Calu3 (cell line): ENCODE measurements at regions of chr7 and their contacts with region 1.

Region 1: GRCh38 chr7:137454246-137454724 is 110.8 kb upstream of the PTN start:
- DNase-seq: no peak
- H3K4me3 Mint-ChIP-seq: no peak overlapping the region
- H3K27ac Mint-ChIP-seq: no peak overlapping the region
- H3K4me1 Mint-ChIP-seq: no peaks in the 10 kb centered on the region
- H3K27me3 Mint-ChIP-seq: peaks cover 7% of the 10 kb centered on the region
- CTCF ChIP-seq: peak; percentile 34

Region 2: DNA sequence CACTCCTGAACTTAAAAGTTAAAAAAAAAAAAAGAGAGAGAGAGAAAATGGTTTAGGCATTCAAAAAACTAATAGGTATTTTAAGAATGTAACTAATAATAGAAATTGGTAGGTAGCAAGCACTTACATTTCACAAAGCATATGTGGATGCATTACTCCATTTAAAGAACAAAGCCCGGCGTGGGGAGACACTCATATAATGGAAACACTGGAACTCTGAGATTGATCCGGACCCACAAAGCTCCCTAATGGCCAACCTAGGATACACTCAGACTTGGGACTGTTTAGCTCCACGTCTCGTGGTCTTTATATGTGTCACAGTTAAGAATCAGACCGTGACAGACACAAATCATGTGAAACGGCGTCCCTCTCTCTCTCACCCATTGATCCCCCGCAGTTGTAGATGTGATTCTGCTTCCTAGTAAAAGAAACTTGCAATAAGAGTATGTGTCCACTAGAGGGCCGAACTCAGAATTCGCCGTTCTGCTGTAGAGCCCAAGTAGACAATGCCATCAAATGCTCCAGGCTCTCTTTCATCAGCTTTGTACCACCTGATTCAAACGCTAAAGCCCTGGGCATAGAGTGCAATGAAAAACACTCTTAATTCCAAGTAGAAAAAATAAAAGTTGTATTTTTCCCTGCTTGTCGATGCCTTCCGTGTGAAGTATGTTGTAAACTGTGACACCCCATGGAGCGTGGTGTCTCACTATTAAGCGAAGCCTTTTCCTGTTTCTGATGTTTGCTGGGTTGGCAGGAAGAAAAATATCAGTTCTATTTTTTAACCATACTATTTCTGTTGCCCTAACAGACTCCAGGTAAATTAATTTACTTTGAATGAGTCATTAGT is 1048.1 kb before region 1 on chr7:
- CTCF ChIA-PET with region 1: no interaction called
- intact Hi-C with region 1: loop called (anchors 5 kb)
- DNase-seq: peak; percentile 46
- H3K4me3 Mint-ChIP-seq: peak overlapping the region; percentile 54
- H3K27ac Mint-ChIP-seq: no peak overlapping the region
- H3K4me1 Mint-ChIP-seq: peaks cover 13% of the 10 kb centered on the region
- H3K27me3 Mint-ChIP-seq: peaks cover 8% of the 10 kb centered on the region
- CTCF ChIP-seq: peak; percentile 66

Region 3: DNA sequence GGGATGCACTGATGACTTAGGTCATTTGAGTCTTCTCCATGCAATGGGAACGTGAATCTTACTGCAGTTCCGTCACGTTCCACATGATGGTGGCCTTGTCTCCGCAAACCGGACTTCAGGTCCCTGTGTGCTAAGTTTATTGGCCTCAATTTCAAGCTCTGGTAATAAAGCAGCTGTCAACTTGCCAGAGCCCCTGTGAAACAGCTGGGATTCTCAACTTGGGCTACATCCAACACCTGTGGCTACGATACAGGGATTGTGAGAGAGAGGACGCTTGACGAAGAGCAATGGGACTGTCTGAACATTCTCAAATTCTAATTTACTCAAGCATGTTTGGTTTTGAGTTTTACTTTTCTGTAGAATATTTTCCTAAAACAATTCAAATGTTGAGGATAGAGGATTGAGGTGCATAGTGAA is 285.0 kb before region 1 on chr7:
- CTCF ChIA-PET with region 1: no interaction called
- intact Hi-C with region 1: loop called (anchors 5 kb)
- DNase-seq: peak; percentile 29
- H3K4me3 Mint-ChIP-seq: no peak overlapping the region
- H3K27ac Mint-ChIP-seq: no peak overlapping the region
- H3K4me1 Mint-ChIP-seq: no peaks in the 10 kb centered on the region
- H3K27me3 Mint-ChIP-seq: no peaks in the 10 kb centered on the region
- CTCF ChIP-seq: peak; percentile 14